ENCODE measurements at regions of chr3 and their contacts with region 1.

Region 1: DNA sequence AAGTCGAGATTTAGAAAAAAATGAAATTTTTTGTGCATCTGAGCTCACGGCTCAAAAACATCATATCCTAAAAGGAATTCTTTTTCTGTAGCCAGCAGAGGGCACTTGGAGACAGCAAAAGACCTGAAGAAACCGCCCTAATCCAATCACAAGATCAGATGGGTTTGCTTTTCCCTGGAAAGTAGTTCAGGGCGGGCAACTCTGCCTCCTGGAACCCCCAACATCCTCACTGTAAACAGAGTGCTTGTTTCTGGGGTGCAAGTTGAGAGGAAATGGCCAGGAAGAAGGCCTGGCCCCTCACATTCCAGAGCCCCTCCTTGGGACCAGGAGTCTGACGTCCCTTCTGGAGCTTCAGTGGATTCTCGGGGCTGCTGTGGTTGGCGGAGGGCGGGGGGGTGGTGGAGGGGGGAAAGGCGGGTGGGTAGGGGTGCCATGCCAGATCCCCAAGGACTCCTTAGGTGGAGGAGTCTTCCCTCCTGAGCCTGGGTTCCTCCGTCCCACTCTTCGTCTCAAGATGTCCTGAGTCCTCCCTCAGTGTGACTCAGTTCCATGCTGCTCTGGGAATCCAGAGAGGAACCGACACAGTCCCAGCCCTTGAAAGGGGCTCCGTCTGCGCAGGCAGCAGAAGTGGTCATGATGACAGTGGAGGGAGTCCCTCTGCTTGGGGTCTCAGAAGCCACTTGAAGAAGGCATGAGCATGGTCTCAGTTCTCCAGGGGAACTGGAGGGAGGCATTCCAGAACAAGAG is 35.9 kb downstream of the CCK start:
- DNase-seq: peak; percentile 34
- ATAC-seq: peak; percentile 74
- H3K4me3 ChIP-seq: no peak overlapping the region
- H3K27ac ChIP-seq: no peak overlapping the region
- H3K4me1 ChIP-seq: peaks cover 0 to 5% of the 10 kb centered on the region in 2 experiments; a peak in 1 of 4 replicates
- H3K27me3 ChIP-seq: no peaks in the 10 kb centered on the region
- CTCF ChIP-seq: peak; percentile 54 to 87 (median 74)
- POLR2A ChIP-seq: no peak
- RAD21 ChIP-seq: peak; percentile 91

Region 2: GRCh38 chr3:41893977-41894376 is 336.1 kb before region 1 on chr3:
- CTCF ChIA-PET with region 1: no interaction called
- POLR2A ChIA-PET with region 1: no interaction called
- RAD21 ChIA-PET with region 1: no interaction called
- intact Hi-C with region 1: loop called (anchors 2 kb)
- DNase-seq: peak; percentile 51
- ATAC-seq: peak; percentile 58; the same call in 1 of the 2 replicates
- H3K4me3 ChIP-seq: no peak overlapping the region
- H3K27ac ChIP-seq: no peak overlapping the region
- H3K4me1 ChIP-seq: no peaks in the 10 kb centered on the region
- H3K27me3 ChIP-seq: no peaks in the 10 kb centered on the region
- CTCF ChIP-seq: peak; percentile 30 to 72 (median 61)
- POLR2A ChIP-seq: no peak
- RAD21 ChIP-seq: peak; percentile 81

Region 3: GRCh38 chr3:42190701-42191462 is 39.2 kb before region 1 on chr3:
- CTCF ChIA-PET with region 1: interaction called, 10 read pairs
- POLR2A ChIA-PET with region 1: no interaction called
- RAD21 ChIA-PET with region 1: interaction called in 1 of 2 experiments, 3 read pairs
- intact Hi-C with region 1: no loop called
- DNase-seq: peak; percentile 41
- ATAC-seq: peak; percentile 86
- H3K4me3 ChIP-seq: no peak overlapping the region
- H3K27ac ChIP-seq: no peak overlapping the region
- H3K4me1 ChIP-seq: peaks cover 21 to 32% of the 10 kb centered on the region in 2 experiments
- H3K27me3 ChIP-seq: no peaks in the 10 kb centered on the region
- CTCF ChIP-seq: peak; percentile 77 to 96 (median 88)
- POLR2A ChIP-seq: no peak
- RAD21 ChIP-seq: peak; percentile 87

Region 4: GRCh38 chr3:42443819-42444436 is 213.8 kb after region 1 on chr3:
- CTCF ChIA-PET with region 1: interaction called, 57 read pairs
- POLR2A ChIA-PET with region 1: no interaction called
- RAD21 ChIA-PET with region 1: interaction called, 9 to 10 read pairs
- intact Hi-C with region 1: loop called (anchors 1 kb)
- DNase-seq: peak; percentile 68
- ATAC-seq: peak; percentile 100
- H3K4me3 ChIP-seq: no peak overlapping the region
- H3K27ac ChIP-seq: no peak overlapping the region
- H3K4me1 ChIP-seq: peaks cover 0 to 8% of the 10 kb centered on the region in 2 experiments; a peak in 1 of 4 replicates
- H3K27me3 ChIP-seq: peaks cover 5% of the 10 kb centered on the region; the same call in 1 of the 2 replicates
- CTCF ChIP-seq: peak; percentile 95 to 99 (median 98)
- POLR2A ChIP-seq: no peak
- RAD21 ChIP-seq: peak; percentile 99

Region 5: GRCh38 chr3:42547401-42547945 is 317.4 kb after region 1 on chr3:
- CTCF ChIA-PET with region 1: interaction called, 24 read pairs
- POLR2A ChIA-PET with region 1: no interaction called
- RAD21 ChIA-PET with region 1: interaction called in 1 of 2 experiments, 3 read pairs
- intact Hi-C with region 1: loop called (anchors 2 kb)
- DNase-seq: peak; percentile 31
- ATAC-seq: peak; percentile 96
- H3K4me3 ChIP-seq: no peak overlapping the region
- H3K27ac ChIP-seq: no peak overlapping the region
- H3K4me1 ChIP-seq: no peaks in the 10 kb centered on the region
- H3K27me3 ChIP-seq: no peaks in the 10 kb centered on the region
- CTCF ChIP-seq: peak; percentile 69 to 99 (median 98); a peak in 5 of 6 replicates
- POLR2A ChIP-seq: no peak
- RAD21 ChIP-seq: peak; percentile 57

Region 6: GRCh38 chr3:42880601-42881451 is 650.7 kb after region 1 on chr3:
- CTCF ChIA-PET with region 1: no interaction called
- POLR2A ChIA-PET with region 1: no interaction called
- RAD21 ChIA-PET with region 1: no interaction called
- intact Hi-C with region 1: loop called (anchors 5 kb)
- DNase-seq: peak; percentile 55
- ATAC-seq: peak; percentile 99
- H3K4me3 ChIP-seq: peak overlapping the region; percentile 42 to 53
- H3K27ac ChIP-seq: peak overlapping the region; percentile 30; the same call in 1 of the 2 replicates
- H3K4me1 ChIP-seq: peaks cover 0 to 13% of the 10 kb centered on the region in 2 experiments; a peak in 3 of 4 replicates
- H3K27me3 ChIP-seq: no peaks in the 10 kb centered on the region
- CTCF ChIP-seq: peak; percentile 74 to 86 (median 82)
- POLR2A ChIP-seq: no peak
- RAD21 ChIP-seq: peak; percentile 94